Spleen (tissue), 13 donors: ENCODE measurements at regions of chr9 and their contacts with region 1.

Region 1: DNA sequence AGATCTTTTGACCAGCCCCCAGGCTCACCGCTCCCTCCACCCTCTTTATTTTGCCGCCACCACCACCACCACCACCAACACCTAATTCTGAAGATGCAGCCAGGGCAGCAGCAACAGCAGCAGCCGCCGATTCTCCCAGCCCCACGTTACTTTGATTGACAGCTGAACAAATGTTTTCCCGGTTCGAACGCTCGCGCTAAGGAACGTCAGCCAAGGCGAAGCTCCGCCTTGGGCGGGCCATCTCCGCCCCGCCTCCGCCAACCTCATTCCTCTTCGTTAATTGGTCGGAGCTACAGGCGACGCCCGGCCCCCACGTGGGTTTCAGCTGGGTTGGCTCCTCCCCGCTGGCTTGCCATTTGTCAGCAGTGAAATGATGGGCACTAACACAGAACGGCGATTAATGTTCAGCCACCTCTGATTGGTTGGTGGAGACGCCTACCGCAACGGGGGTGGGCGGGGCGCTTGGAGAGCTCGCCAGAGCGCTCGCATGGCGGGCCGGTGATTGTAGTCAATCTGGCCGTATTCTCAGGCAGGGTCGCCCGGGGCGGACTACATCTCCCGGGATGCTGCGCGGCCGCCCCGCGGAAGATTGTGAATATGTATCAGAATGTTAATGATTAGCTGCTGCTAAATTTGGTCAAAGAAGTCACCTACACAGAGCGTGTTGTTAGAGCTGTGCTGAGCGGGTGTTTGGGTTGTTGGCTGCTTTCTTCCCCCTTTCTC is at the start of gene TLE4:
- DNase-seq: peak; percentile 100
- H3K4me3 ChIP-seq: peak within 1 kb of the TSS; percentile 80 to 96 (median 86)
- H3K27ac ChIP-seq: peak within 1 kb of the TSS; percentile 90 to 99 (median 98)
- H3K4me1 ChIP-seq: peaks cover 12 to 64% (median 46%) of the 10 kb centered on the region in 6 donors
- H3K27me3 ChIP-seq: peaks cover 0 to 15% (median 4%) of the 10 kb centered on the region in 7 donors
- CTCF ChIP-seq: peak in 3 of 11 experiments; percentile 10 to 42 (median 20)
- POLR2A ChIP-seq: peak; percentile 15 to 99 (median 93)
- total RNA-seq, gene TLE4: 67.3 to 92.8 (median 76.4) TPM

Region 2: DNA sequence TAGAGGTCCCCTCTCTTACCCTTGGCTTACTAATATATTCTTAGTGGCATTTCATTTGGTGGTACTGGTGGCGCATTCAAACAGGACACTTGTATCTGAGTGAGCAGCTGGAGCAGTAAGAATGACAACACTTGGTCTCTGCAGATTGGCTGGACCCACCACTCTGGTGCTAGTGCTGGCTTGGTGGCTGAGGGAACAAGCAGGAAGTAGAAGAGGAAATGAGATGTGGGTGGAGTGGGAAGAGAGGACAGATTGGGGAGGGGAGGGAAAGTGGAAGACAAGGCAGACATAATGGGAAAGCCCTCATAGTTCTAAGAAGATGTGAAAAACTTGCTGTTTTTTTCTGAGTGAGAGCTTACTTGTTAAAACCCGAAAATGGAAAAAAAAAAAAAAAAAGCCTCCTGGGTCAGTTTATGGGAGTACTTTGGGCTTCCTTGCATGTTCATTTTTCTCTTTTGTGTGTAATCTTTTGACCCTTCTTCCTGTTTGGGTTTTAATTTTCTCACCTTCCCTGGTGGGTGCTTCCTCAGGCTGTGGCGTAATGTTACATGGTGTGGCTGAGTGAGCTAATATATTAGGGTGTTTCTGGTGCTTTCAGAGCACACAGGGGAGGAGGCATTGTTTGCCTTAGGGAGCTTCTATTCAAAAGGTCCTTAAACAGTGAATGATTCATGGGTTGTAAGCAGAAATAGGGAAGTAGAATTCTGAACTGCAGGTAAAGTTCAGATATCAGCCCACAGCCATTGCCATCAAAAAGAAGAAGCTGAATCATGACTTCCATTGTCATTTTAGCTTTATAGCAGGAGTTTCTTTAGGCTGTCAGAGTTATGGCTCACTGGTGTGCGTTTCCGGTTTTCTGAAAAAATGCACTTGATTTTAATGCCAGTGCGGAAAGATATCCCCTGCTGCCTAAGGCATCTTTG is 52.6 kb after region 1 on chr9:
- intact Hi-C with region 1: loop called (anchors 10 kb)
- DNase-seq: no peak
- H3K4me3 ChIP-seq: peak overlapping the region in 1 of 8 donors; percentile 32
- H3K27ac ChIP-seq: peak overlapping the region in 7 of 8 donors; percentile 48 to 80 (median 74)
- H3K4me1 ChIP-seq: peaks cover 11 to 63% (median 34%) of the 10 kb centered on the region in 6 donors
- H3K27me3 ChIP-seq: no peaks in the 10 kb centered on the region
- CTCF ChIP-seq: no peak
- POLR2A ChIP-seq: no peak

Region 3: GRCh38 chr9:79686381-79687130 is 115.1 kb after region 1 on chr9:
- intact Hi-C with region 1: loop called (anchors 10 kb)
- DNase-seq: no peak
- H3K4me3 ChIP-seq: no peak overlapping the region
- H3K27ac ChIP-seq: no peak overlapping the region
- H3K4me1 ChIP-seq: peaks cover 13 to 45% (median 19%) of the 10 kb centered on the region in 6 donors
- H3K27me3 ChIP-seq: no peaks in the 10 kb centered on the region
- CTCF ChIP-seq: no peak
- POLR2A ChIP-seq: no peak